HEK293 (cell line): ENCODE measurements at regions of chr7 and their contacts with region 1.

Region 1: DNA sequence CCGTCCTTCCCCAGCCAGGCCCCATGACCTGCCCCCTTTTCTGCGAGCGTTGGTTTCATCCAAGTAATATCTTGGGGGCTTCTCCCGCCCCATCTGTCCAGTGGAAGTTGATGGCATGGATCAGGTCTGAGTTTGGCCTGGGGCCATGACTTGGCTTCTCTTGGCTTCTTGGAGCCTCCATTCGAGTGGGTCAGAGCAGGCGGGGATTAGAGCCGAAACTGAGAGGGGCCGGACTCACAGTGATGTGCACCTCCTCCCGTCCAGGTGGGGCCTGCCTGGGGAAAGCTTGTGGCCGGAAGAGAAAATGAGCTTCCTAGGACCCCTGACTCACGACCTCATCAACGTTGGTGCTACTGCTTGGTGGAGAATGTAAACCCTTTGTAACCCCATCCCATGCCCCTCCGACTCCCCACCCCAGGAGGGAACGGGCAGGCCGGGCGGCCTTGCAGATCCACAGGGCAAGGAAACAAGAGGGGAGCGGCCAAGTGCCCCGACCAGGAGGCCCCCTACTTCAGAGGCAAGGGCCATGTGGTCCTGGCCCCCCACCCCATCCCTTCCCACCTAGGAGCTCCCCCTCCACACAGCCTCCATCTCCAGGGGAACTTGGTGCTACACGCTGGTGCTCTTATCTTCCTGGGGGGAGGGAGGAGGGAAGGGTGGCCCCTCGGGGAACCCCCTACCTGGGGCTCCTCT is 15.1 kb upstream of the LIMK1 start:
- H3K4me3 ChIP-seq: no peak overlapping the region
- H3K27ac ChIP-seq: no peak overlapping the region
- H3K4me1 ChIP-seq: no peaks in the 10 kb centered on the region
- CTCF ChIP-seq: no peak

Region 2: GRCh38 chr7:74183613-74184450 is 115.3 kb after region 1 on chr7:
- CTCF ChIA-PET with region 1: interaction called, 10 read pairs
- POLR2A ChIA-PET with region 1: no interaction called
- H3K4me3 ChIP-seq: no peak overlapping the region
- H3K27ac ChIP-seq: no peak overlapping the region
- H3K4me1 ChIP-seq: peaks cover 10% of the 10 kb centered on the region; the same call in 1 of the 2 replicates
- CTCF ChIP-seq: no peak